ENCODE measurements at regions of chr12 and their contacts with region 1.

Region 1: DNA sequence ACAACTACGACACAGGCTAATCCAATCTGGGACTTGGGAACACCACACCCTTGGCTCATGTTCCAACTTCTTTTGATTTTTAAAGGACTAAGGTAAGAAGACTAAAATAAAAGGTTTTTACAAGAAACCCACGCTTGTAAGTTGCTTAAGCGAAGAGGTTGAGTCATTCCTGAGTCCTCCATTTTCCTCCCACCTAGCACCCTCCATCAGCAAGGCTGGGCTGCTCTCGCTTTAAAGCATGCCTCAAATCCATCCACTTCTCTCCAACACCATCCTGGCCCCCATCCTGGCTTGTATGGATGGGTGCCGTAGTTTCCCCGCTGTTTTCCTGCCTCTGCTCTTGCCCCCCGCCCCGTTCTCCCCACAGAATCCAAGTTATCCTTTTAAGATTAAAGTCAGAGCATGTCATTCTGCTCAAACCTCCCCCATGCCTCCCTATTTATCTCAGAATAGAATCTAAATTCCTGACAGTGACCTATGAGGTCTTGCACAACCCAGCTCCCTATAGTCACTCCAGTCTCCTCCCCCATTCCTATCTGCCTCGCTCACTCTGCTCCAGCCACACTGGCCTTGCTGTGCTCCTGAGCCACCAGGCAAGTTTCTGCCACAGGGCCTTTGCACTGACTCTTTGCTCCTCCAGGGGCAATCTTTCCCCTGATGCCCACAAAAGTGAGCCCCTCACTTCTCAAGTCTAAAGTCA is 34.5 kb downstream of the SCARB1 start:
- DNase-seq: peak; percentile 93
- ATAC-seq: peak; percentile 83
- H3K4me3 ChIP-seq: peak overlapping the region; percentile 40 to 65 (median 44)
- H3K27ac ChIP-seq: peak overlapping the region; percentile 95
- H3K4me1 ChIP-seq: peaks cover 92% of the 10 kb centered on the region
- H3K27me3 ChIP-seq: no peaks in the 10 kb centered on the region
- CTCF ChIP-seq: peak; percentile 28
- EP300 ChIP-seq: peak; percentile 79 to 92
- POLR2A ChIP-seq: peak in 1 of 2 experiments; percentile 43; a peak in 1 of 4 replicates
- RAD21 ChIP-seq: peak; percentile 35; the same call in 1 of the 2 replicates

Region 2: GRCh38 chr12:124774462-124775167 is 54.5 kb before region 1 on chr12:
- CTCF ChIA-PET with region 1: no interaction called
- POLR2A ChIA-PET with region 1: interaction called, 11 read pairs
- in situ Hi-C with region 1: no loop called
- intact Hi-C with region 1: loop called (anchors 5 kb)
- DNase-seq: no peak
- ATAC-seq: no peak
- H3K4me3 ChIP-seq: peak overlapping the region in 1 of 3 experiments; percentile 11; a peak in 2 of 6 replicates
- H3K27ac ChIP-seq: no peak overlapping the region
- H3K4me1 ChIP-seq: peaks cover 84% of the 10 kb centered on the region
- H3K27me3 ChIP-seq: no peaks in the 10 kb centered on the region
- CTCF ChIP-seq: no peak
- EP300 ChIP-seq: no peak
- POLR2A ChIP-seq: no peak
- RAD21 ChIP-seq: no peak

Region 3: GRCh38 chr12:124804011-124804621 is 25.0 kb before region 1 on chr12:
- CTCF ChIA-PET with region 1: no interaction called
- POLR2A ChIA-PET with region 1: interaction called, 10 read pairs
- in situ Hi-C with region 1: no loop called
- intact Hi-C with region 1: no loop called
- DNase-seq: peak; percentile 63
- ATAC-seq: peak; percentile 86
- H3K4me3 ChIP-seq: no peak overlapping the region
- H3K27ac ChIP-seq: peak overlapping the region; percentile 33
- H3K4me1 ChIP-seq: peaks cover 23% of the 10 kb centered on the region; the same call in 1 of the 2 replicates
- H3K27me3 ChIP-seq: no peaks in the 10 kb centered on the region
- CTCF ChIP-seq: 0 out of 2 replicates have a peak, but pooled peaks have one; percentile 5
- EP300 ChIP-seq: no peak
- POLR2A ChIP-seq: no peak
- RAD21 ChIP-seq: no peak

Region 4: DNA sequence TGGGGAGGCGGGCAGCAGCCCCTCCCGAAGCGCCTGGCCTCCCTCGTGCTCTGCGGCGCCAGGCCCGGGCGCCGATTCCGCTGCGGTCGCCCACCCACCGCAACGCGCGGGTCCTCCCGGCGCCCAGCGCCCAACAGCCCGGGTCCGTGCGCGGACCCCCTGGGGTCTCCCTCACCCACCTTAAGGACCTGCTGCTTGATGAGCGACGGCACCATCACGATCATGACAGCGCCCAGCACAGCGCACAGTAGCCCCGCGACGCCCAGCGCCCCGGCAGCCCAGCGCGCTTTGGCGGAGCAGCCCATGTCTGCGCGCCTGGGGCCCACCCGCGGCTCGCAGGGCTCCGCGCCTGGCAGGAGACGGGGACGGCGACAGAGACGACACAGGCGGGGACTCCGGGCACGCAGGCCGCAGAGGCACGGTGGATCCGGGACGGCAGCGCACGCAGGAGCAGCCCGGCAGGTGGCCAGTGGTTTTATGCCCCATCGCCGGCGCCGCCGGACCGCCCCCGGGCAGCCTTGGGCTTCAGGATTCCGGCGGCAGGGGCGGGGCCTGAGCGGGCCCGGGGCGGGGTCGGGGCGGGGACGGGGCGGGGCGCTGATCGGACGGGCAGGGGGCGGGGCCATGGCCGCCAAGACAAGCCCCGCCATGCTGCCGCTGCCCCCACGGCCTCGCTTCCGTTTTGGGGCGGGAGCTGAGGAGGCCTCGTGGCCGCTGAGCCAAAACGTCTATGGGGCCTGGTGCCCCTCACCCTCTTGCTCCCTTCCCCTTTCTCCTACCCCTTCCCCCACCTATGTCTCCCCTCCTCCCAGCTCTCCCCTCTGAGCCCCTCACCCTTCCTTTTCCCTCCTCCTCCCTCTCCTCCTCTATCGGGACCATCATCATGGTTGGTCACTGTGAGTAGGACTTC is 34.5 kb after region 1 on chr12 and contains the start of gene SCARB1:
- CTCF ChIA-PET with region 1: no interaction called
- POLR2A ChIA-PET with region 1: interaction called, 13 read pairs
- in situ Hi-C with region 1: no loop called
- intact Hi-C with region 1: loop called (anchors 5 kb)
- DNase-seq: peak; percentile 66
- ATAC-seq: peak; percentile 91
- H3K4me3 ChIP-seq: peak within 1 kb of the TSS; percentile 76 to 94 (median 85)
- H3K27ac ChIP-seq: peak within 1 kb of the TSS; percentile 72
- H3K4me1 ChIP-seq: peaks cover 77% of the 10 kb centered on the region
- H3K27me3 ChIP-seq: no peaks in the 10 kb centered on the region; a peak in 1 of 5 replicates
- CTCF ChIP-seq: peak; percentile 62
- EP300 ChIP-seq: no peak
- POLR2A ChIP-seq: peak; percentile 89 to 98
- RAD21 ChIP-seq: peak; percentile 70
- total RNA-seq, gene SCARB1: 33.2 and 63.4 TPM in 2 replicates

Region 5: DNA sequence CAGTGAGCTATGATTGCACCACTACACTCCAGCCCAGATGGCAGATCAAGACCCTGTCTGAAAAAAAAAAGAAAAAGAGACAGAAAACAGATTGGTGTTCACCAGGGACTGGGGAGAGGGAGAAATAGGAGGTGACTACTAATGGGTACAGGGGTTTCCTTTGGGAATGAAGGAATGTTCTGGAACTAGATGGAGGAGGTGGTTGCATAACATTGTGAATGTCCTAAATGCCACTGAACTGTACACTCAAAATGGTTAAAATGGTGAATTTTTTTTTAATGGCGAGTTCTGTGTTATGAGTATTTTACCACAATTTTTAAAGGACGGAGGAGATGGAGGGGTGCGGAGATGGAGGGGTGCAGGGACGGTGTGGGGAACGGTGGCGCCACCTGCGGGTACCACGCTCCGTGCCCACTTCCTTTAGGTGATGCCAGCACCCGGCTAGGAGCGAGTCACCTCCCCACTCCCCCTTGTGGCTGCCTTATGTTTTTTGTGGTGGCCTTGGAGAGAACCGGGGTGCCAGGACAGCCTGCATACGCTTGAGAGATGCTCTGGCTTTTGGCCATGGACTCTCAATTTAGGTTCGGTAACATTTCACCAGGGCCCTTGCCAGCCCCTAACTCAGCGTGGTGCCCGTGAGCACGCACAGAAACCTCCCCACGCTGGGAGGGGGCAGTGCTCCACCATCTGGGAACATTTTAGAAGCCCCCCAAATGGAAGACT is 69.2 kb after region 1 on chr12:
- CTCF ChIA-PET with region 1: no interaction called
- POLR2A ChIA-PET with region 1: interaction called, 27 read pairs
- in situ Hi-C with region 1: no loop called
- intact Hi-C with region 1: no loop called
- DNase-seq: peak; percentile 63
- ATAC-seq: peak; percentile 60
- H3K4me3 ChIP-seq: no peak overlapping the region
- H3K27ac ChIP-seq: no peak overlapping the region
- H3K4me1 ChIP-seq: peaks cover 85% of the 10 kb centered on the region
- H3K27me3 ChIP-seq: no peaks in the 10 kb centered on the region
- CTCF ChIP-seq: peak; percentile 85
- EP300 ChIP-seq: no peak
- POLR2A ChIP-seq: no peak
- RAD21 ChIP-seq: peak; percentile 88

Region 6: GRCh38 chr12:124906606-124907261 is 77.6 kb after region 1 on chr12:
- CTCF ChIA-PET with region 1: no interaction called
- POLR2A ChIA-PET with region 1: interaction called, 27 read pairs
- in situ Hi-C with region 1: no loop called
- intact Hi-C with region 1: loop called (anchors 5 kb)
- DNase-seq: peak; percentile 93
- ATAC-seq: peak; percentile 51
- H3K4me3 ChIP-seq: no peak overlapping the region
- H3K27ac ChIP-seq: no peak overlapping the region
- H3K4me1 ChIP-seq: peaks cover 69% of the 10 kb centered on the region
- H3K27me3 ChIP-seq: no peaks in the 10 kb centered on the region
- CTCF ChIP-seq: peak; percentile 91
- EP300 ChIP-seq: no peak
- POLR2A ChIP-seq: peak in 1 of 2 experiments; percentile 47; a peak in 1 of 4 replicates
- RAD21 ChIP-seq: peak; percentile 90

Region 7: DNA sequence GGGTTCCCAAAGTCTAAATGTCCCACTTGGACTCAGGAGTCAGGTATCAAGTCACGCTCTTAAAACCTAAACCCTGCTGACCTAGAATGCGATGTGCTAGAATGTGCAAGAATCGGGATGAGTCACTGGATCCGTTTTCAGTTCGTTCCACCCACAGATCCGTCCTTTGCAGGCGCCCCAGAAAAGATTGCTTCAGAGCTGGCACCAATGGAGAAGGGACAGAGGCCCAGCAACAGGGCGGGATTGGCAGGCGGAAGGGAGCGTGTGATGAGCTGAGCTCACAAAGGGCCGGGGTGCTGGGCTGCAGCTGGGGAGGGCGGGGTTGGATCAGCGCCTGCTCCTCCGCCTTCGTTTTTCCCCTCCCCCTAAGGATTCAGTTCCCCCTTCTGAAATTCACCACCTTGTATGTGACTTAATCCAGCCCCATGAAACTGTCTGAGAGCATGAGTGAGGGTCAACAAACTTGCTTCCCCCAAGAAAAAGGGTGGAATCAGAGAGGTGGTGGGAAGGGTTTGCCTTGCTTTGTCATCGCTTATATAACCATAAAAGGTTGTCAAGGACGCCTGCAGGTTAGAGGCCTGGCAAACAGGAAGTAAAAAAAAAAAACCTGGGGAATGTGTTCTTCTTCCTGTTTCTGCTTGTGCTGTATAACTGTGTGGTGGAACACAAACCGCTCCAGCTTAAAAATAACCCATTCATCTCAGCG is 88.1 kb after region 1 on chr12:
- CTCF ChIA-PET with region 1: no interaction called
- POLR2A ChIA-PET with region 1: interaction called, 16 read pairs
- in situ Hi-C with region 1: no loop called
- intact Hi-C with region 1: no loop called
- DNase-seq: peak; percentile 99
- ATAC-seq: peak; percentile 81
- H3K4me3 ChIP-seq: peak overlapping the region; percentile 53 to 99 (median 86)
- H3K27ac ChIP-seq: peak overlapping the region; percentile 100
- H3K4me1 ChIP-seq: peaks cover 50% of the 10 kb centered on the region
- H3K27me3 ChIP-seq: no peaks in the 10 kb centered on the region; a peak in 1 of 5 replicates
- CTCF ChIP-seq: no peak
- EP300 ChIP-seq: peak; percentile 92 to 96
- POLR2A ChIP-seq: peak; percentile 54 to 65; a peak in 3 of 4 replicates
- RAD21 ChIP-seq: peak; percentile 9; the same call in 1 of the 2 replicates

Region 8: GRCh38 chr12:125029761-125030358 is 200.7 kb after region 1 on chr12:
- CTCF ChIA-PET with region 1: no interaction called
- POLR2A ChIA-PET with region 1: no interaction called
- in situ Hi-C with region 1: no loop called
- intact Hi-C with region 1: no loop called
- DNase-seq: no peak
- ATAC-seq: no peak
- H3K4me3 ChIP-seq: no peak overlapping the region
- H3K27ac ChIP-seq: no peak overlapping the region
- H3K4me1 ChIP-seq: no peaks in the 10 kb centered on the region
- H3K27me3 ChIP-seq: no peaks in the 10 kb centered on the region
- CTCF ChIP-seq: no peak
- EP300 ChIP-seq: no peak
- POLR2A ChIP-seq: no peak
- RAD21 ChIP-seq: no peak

Measured in HepG2 (cell line).